PC-9 (cell line): ENCODE measurements at regions of chr13 and their contacts with region 1.

Region 1: GRCh38 chr13:97809576-97809975 is 143.9 kb upstream of the IPO5 start:
- DNase-seq: no peak
- H3K4me3 ChIP-seq: no peak overlapping the region
- H3K27ac ChIP-seq: no peak overlapping the region
- H3K4me1 ChIP-seq: no peaks in the 10 kb centered on the region
- H3K27me3 ChIP-seq: no peaks in the 10 kb centered on the region
- CTCF ChIP-seq: no peak

Region 2: GRCh38 chr13:97567510-97568243 is 241.9 kb before region 1 on chr13:
- CTCF ChIA-PET with region 1: interaction called, 4 read pairs
- POLR2A ChIA-PET with region 1: no interaction called
- intact Hi-C with region 1: loop called (anchors 10 kb)
- DNase-seq: peak; percentile 74 to 90
- H3K4me3 ChIP-seq: no peak overlapping the region
- H3K27ac ChIP-seq: no peak overlapping the region
- H3K4me1 ChIP-seq: peaks cover 23% of the 10 kb centered on the region
- H3K27me3 ChIP-seq: no peaks in the 10 kb centered on the region
- CTCF ChIP-seq: no peak

Region 3: DNA sequence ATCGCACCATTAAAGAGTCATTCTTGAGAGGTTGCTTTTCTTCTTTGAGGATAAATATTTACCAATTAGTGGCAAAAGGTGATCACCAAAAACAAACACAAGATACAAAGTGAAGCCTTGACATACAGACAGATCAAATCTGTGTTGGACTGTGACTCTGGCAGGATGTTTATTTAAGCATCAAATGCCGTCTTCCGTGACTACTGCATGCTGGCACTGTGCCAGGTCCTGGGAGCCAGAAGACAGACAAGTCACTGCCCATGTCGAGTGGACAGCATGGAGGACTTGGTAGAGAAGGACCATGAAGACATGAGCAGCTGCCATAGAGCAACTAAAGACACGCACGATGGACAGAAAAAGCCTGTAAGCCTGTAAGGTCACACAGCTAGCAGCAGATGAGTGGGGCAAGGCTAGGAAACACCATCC is 240.5 kb after region 1 on chr13:
- CTCF ChIA-PET with region 1: no interaction called
- POLR2A ChIA-PET with region 1: no interaction called
- intact Hi-C with region 1: no loop called
- DNase-seq: peak in 1 of 2 experiments; percentile 21
- H3K4me3 ChIP-seq: no peak overlapping the region
- H3K27ac ChIP-seq: no peak overlapping the region
- H3K4me1 ChIP-seq: 0 out of 2 replicates have a peak, but pooled peaks cover 7% of the 10 kb centered on the region
- H3K27me3 ChIP-seq: no peaks in the 10 kb centered on the region
- CTCF ChIP-seq: no peak